Lower leg skin (tissue), 4 donors: ENCODE measurements at regions of chr3 and their contacts with region 1.

Region 1: GRCh38 chr3:64399205-64399800 is 174.0 kb upstream of the PRICKLE2 start:
- DNase-seq: peak in 1 of 2 donors; percentile 31
- H3K4me3 ChIP-seq: no peak overlapping the region
- CTCF ChIP-seq: no peak
- POLR2A ChIP-seq: no peak

Region 2: GRCh38 chr3:64028754-64029153 is 370.5 kb before region 1 on chr3:
- intact Hi-C with region 1: loop called (anchors 5 kb)
- DNase-seq: no peak
- H3K4me3 ChIP-seq: no peak overlapping the region
- CTCF ChIP-seq: no peak
- POLR2A ChIP-seq: no peak

Region 3: DNA sequence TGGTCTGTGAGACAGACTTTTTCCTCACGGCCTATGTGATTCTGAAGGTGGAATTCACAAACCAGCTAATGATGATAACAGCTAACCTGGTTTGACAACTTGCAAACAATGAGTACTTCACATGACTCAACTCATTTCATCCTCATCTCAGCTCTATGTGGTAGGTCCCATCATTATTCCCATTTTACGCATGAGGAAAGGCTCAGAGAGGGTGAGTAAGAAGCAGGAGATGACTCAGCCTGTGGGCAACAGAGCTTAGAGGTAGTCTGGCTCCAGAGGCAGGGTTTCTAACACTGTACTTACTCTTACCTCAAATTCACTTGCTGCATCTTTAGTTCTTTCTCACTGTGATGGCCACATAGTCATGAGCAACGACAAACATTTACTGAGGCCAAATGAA is 350.2 kb before region 1 on chr3:
- intact Hi-C with region 1: no loop called
- DNase-seq: no peak
- H3K4me3 ChIP-seq: no peak overlapping the region
- CTCF ChIP-seq: no peak
- POLR2A ChIP-seq: no peak

Region 4: GRCh38 chr3:64195789-64196188 is 203.5 kb before region 1 on chr3:
- intact Hi-C with region 1: loop called (anchors 5 kb)
- DNase-seq: no peak
- H3K4me3 ChIP-seq: no peak overlapping the region
- CTCF ChIP-seq: no peak
- POLR2A ChIP-seq: no peak